Aorta (tissue), 5 donors: ENCODE measurements at regions of chr11 and their contacts with region 1.

Region 1: GRCh38 chr11:75248690-75249268 is 8.2 kb downstream of the TPBGL start:
- DNase-seq: peak; percentile 92 to 96
- ATAC-seq: peak; percentile 95
- H3K4me3 ChIP-seq: no peak overlapping the region
- H3K27ac ChIP-seq: no peak overlapping the region
- H3K4me1 ChIP-seq: no peaks in the 10 kb centered on the region
- H3K27me3 ChIP-seq: no peaks in the 10 kb centered on the region

Region 2: DNA sequence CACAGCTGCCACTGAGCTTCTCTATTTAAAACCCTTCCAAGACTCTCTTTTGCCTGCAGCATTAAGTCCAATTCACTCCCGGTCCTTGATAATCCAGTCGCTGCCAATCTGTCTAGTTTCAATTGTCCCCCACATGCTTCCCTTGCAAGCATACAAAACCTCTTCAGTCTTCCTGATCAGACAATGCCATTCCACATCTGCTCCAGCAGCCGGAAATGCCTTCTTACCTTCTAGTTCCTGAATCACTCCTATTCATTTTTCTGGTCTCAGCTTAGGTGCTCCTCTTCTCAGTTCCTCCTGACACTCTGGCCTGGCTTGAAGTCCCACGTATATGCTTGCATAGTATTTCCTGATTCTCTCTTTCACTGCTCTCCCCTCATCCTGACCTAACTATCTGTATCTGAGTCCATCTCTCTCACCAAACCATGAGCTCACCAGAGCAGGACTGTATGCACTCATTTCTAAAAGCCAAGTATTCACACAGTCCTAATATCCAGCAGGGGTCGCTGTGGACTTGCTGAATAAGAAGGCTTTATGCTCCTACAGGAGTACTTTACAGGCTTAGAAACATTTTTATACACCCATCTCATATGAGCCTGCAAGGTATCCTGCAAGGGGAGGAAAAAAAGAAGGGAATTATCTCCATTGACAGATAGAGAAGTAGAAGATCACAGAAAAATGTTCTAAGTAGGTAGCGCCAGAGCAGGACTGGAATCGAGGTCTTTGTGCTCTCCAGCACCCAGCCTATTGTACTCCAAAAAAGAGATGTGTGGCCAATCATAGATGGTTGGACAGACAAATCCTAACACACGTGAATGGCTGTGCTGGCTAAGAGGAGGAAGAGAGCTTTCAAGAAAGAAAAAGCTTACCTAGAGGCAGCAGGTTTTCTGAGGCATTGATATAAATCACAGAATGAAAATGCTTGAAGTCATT is 319.1 kb before region 1 on chr11:
- intact Hi-C with region 1: loop called (anchors 5 kb)
- DNase-seq: peak in 1 of 2 donors; percentile 66
- ATAC-seq: peak; percentile 78
- H3K4me3 ChIP-seq: no peak overlapping the region
- H3K27ac ChIP-seq: no peak overlapping the region
- H3K4me1 ChIP-seq: no peaks in the 10 kb centered on the region
- H3K27me3 ChIP-seq: no peaks in the 10 kb centered on the region

Region 3: GRCh38 chr11:75022759-75023396 is 225.9 kb before region 1 on chr11:
- intact Hi-C with region 1: loop called (anchors 2 to 5 kb)
- DNase-seq: peak; percentile 80 to 86
- ATAC-seq: peak; percentile 77
- H3K4me3 ChIP-seq: no peak overlapping the region
- H3K27ac ChIP-seq: no peak overlapping the region
- H3K4me1 ChIP-seq: no peaks in the 10 kb centered on the region
- H3K27me3 ChIP-seq: no peaks in the 10 kb centered on the region

Region 4: DNA sequence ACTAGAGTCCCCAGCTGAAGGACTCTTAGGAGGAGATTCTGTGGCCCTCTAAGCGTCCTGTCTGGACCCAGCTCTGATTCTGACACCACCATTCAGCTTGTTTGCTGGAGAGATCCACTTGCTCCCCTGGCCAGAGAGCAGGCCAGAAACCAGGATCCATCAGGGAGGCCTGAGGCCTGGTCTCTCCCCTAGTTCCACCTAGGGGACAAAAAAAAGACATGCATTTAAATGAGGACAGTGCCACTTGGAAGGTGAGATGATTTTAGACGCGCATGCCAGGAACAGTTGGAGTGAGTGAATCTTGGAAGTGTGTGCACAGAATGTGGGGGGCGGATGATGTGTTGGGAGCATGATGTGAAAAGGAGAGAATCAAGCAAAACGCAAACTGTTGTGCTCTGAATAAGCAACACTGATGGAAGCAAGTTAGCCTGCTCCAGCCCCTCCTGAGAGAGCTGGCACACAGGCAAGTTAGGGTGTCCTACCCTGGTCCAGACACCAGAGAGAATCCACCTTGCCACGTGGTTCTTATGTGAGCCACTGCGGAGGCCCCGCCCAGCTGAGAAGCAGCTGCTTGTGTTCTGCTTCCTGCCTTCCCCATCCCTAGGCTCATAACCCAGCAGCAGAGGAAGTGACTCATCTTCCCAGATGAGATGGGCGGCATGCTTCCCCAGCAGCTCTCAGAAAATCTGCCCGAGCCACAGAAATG is 105.9 kb before region 1 on chr11:
- intact Hi-C with region 1: loop called (anchors 2 kb)
- DNase-seq: peak; percentile 84 to 88
- ATAC-seq: peak; percentile 74
- H3K4me3 ChIP-seq: no peak overlapping the region
- H3K27ac ChIP-seq: no peak overlapping the region
- H3K4me1 ChIP-seq: no peaks in the 10 kb centered on the region
- H3K27me3 ChIP-seq: no peaks in the 10 kb centered on the region

Region 5: DNA sequence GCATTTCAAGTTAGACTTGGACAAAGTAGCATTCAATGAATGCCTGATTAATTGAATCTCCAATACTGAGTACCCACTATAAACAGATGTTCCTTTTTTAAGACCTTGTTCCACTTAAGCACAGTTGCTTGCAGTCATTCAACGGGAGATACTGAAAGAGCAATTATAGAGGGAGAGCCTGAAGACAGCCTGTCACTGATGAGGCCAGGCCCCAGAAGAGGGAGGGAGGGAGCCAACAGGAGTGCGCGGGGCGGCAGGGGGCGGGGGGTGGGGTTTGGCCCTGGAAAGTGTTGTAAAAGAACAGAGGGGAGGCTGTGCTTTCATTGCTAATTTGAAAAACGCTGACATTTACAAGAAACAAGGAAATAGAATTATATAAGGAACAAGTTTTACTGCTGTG is 366.9 kb after region 1 on chr11:
- intact Hi-C with region 1: no loop called
- DNase-seq: no peak
- ATAC-seq: no peak
- H3K4me3 ChIP-seq: no peak overlapping the region
- H3K27ac ChIP-seq: no peak overlapping the region
- H3K4me1 ChIP-seq: no peaks in the 10 kb centered on the region
- H3K27me3 ChIP-seq: no peaks in the 10 kb centered on the region

Region 6: DNA sequence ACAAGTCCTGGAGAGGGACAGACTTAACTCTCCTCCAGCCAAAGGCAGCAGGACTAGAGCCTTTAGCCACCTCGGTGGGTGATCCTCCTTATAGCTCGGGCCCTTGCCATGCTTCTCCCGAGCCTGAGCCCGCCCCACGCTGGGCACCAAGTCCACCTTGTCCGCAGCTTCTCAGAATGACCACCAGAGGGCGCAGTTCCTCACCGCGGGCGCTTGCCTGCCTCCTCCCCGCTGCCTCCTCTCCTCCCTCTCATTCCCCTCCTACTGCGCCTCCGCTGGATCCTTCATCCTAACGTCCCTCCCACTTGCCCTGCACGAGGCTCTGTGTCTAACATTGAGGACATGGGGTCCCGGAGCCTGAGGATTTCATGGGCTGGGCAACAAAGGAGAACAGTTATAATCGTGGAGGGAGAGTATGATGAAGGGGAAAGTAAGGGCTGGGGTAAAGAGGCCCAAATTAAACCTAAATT is 457.5 kb after region 1 on chr11:
- intact Hi-C with region 1: no loop called
- DNase-seq: peak; percentile 77 to 91
- ATAC-seq: peak; percentile 92
- H3K4me3 ChIP-seq: no peak overlapping the region
- H3K27ac ChIP-seq: no peak overlapping the region
- H3K4me1 ChIP-seq: no peaks in the 10 kb centered on the region
- H3K27me3 ChIP-seq: no peaks in the 10 kb centered on the region